Spleen (tissue), 13 donors: ENCODE measurements at regions of chr2 and their contacts with region 1.

Region 1: GRCh38 chr2:120343433-120344105 is 2.4 kb upstream of the INHBB start:
- DNase-seq: peak; percentile 94
- H3K4me3 ChIP-seq: peak overlapping the region in 5 of 8 donors; percentile 3 to 80 (median 9)
- H3K27ac ChIP-seq: no peak overlapping the region
- H3K4me1 ChIP-seq: peaks cover 28 to 72% (median 50%) of the 10 kb centered on the region in 6 donors
- H3K27me3 ChIP-seq: peaks cover 3 to 99% (median 82%) of the 10 kb centered on the region in 7 donors
- CTCF ChIP-seq: peak; percentile 36 to 88 (median 73)
- POLR2A ChIP-seq: no peak

Region 2: GRCh38 chr2:120559401-120559800 is 215.8 kb after region 1 on chr2:
- intact Hi-C with region 1: loop called (anchors 5 kb)
- DNase-seq: no peak
- H3K4me3 ChIP-seq: no peak overlapping the region
- H3K27ac ChIP-seq: no peak overlapping the region
- H3K4me1 ChIP-seq: no peaks in the 10 kb centered on the region
- H3K27me3 ChIP-seq: peaks cover 0 to 56% (median 0%) of the 10 kb centered on the region in 7 donors
- CTCF ChIP-seq: no peak
- POLR2A ChIP-seq: no peak

Region 3: GRCh38 chr2:120722568-120723421 is 379.2 kb after region 1 on chr2:
- intact Hi-C with region 1: no loop called
- DNase-seq: peak; percentile 36
- H3K4me3 ChIP-seq: no peak overlapping the region
- H3K27ac ChIP-seq: peak overlapping the region in 1 of 8 donors; percentile 48
- H3K4me1 ChIP-seq: peaks cover 0 to 13% (median 2%) of the 10 kb centered on the region in 6 donors
- H3K27me3 ChIP-seq: peaks cover 0 to 4% (median 0%) of the 10 kb centered on the region in 7 donors
- CTCF ChIP-seq: no peak
- POLR2A ChIP-seq: no peak